K562 (cell line): ENCODE measurements at regions of chr9 and their contacts with region 1.

Region 1: DNA sequence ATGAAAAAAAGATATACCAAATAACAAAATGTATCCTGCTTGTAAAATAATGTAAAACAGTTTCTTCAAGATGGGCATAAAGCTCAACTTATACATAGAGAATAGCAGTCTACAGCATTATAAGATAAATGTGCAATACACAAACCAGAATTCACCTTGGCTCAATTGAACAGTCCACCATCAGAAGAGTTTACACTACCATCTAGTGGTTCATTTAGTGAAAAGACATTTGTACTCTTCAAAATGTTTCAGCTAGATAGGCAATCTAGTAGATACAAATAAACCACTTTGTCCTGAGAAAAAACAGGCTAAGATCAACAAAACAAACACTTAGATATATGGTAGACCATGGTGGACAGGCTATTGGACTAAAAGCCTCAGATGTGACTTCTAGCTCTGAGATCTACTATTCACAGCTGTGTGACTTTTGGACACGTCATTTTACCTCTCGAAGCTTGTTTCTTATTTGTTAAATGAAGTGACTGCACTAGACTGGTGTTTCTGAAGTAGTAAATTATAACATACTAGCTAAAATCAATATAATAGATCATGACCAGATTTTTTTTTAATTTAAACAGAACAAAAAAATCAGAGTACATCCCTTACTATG is 22.1 kb upstream of the TPD52L3 start:
- DNase-seq: peak in 2 of 4 experiments; percentile 17 to 20
- ATAC-seq: peak; percentile 58; the same call in 2 of the 3 replicates
- H3K4me3 ChIP-seq: no peak overlapping the region
- H3K27ac ChIP-seq: no peak overlapping the region
- H3K4me1 ChIP-seq: no peaks in the 10 kb centered on the region
- H3K27me3 ChIP-seq: no peaks in the 10 kb centered on the region
- CTCF ChIP-seq: peak in 2 of 3 experiments; percentile 14 to 54; a peak in 3 of 6 replicates
- EP300 ChIP-seq: no peak
- POLR2A ChIP-seq: no peak
- RAD21 ChIP-seq: peak; percentile 62 to 82

Region 2: DNA sequence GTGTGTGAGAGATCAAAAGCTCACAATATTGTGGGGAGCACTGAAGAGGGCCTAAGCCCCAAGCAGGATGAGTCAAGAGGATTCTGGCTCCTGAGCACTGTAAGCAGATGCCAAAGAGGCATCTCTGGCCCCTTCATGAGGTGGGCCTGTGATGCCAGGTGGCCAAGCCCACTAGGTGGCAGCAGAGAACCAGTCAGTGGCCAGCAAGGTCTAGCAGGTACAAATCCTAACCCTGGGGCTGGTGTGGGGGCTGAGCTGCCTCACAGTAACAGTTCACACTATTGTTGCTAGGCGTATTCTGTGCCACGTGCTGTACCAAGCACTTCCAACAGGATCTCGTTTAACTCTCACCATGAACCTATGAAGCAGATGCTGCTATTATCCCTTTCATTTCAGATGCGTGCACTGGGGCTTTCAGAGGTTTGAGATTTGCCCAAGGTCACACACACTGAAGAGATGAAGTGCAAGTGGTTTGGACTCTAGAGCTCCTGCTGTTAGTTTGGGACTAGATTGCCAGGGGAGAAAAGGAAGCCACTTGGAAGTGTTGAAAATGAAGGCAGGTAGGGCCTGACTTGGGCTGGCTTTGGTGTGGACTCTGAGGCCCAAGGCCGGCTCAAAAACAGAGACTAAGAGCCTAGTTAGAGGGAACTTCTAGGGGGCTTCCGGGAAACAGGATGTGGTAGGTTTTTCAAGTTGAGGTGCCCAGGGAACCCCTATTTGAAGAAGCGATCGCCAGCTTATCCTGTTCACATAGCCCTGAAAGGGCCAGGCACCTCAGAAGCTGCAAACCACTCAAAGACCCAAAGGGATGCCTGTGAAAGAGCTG is 419.7 kb before region 1 on chr9:
- CTCF ChIA-PET with region 1: interaction called, 4 read pairs
- POLR2A ChIA-PET with region 1: no interaction called
- in situ Hi-C with region 1: loop called (anchors 25 kb)
- intact Hi-C with region 1: loop called (anchors 5 kb)
- DNase-seq: peak; percentile 67 to 80 (median 75)
- ATAC-seq: peak; percentile 99
- H3K4me3 ChIP-seq: no peak overlapping the region
- H3K27ac ChIP-seq: no peak overlapping the region
- H3K4me1 ChIP-seq: 0 out of 5 replicates have a peak, but pooled peaks cover 0 to 3% of the 10 kb centered on the region in 2 experiments
- H3K27me3 ChIP-seq: no peaks in the 10 kb centered on the region
- CTCF ChIP-seq: peak; percentile 79 to 88 (median 85)
- EP300 ChIP-seq: no peak
- POLR2A ChIP-seq: no peak
- RAD21 ChIP-seq: peak; percentile 75 to 92

Region 3: DNA sequence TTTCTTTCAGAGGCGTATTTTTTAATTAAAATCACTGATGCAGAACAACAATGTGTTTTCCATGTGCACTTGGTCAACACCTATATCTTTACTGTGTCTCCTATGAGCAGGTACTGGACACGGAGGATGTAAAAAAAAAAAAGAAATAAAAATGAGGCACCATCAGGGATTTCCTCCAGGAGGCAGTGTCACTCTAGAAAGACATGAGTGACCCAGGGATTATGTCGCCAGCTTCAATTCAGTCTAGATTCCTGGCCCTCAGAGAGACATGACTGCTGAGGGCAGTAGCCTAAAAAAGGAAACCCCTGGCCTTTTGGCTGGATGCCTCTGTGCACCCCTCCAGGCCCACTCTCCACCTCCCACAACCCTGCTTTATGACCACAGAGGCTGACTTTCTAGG is 108.7 kb before region 1 on chr9:
- CTCF ChIA-PET with region 1: no interaction called
- POLR2A ChIA-PET with region 1: no interaction called
- in situ Hi-C with region 1: no loop called
- intact Hi-C with region 1: loop called (anchors 10 kb)
- DNase-seq: peak in 2 of 4 experiments; percentile 9 to 14
- ATAC-seq: 0 out of 3 replicates have a peak, but pooled peaks have one; percentile 39
- H3K4me3 ChIP-seq: no peak overlapping the region
- H3K27ac ChIP-seq: no peak overlapping the region
- H3K4me1 ChIP-seq: no peaks in the 10 kb centered on the region
- H3K27me3 ChIP-seq: no peaks in the 10 kb centered on the region
- CTCF ChIP-seq: peak; percentile 11 to 37 (median 24); a peak in 2 of 6 replicates
- EP300 ChIP-seq: no peak
- POLR2A ChIP-seq: no peak
- RAD21 ChIP-seq: no peak

Region 4: GRCh38 chr9:6348766-6349165 is 42.7 kb after region 1 on chr9:
- CTCF ChIA-PET with region 1: no interaction called
- POLR2A ChIA-PET with region 1: no interaction called
- in situ Hi-C with region 1: no loop called
- intact Hi-C with region 1: no loop called
- DNase-seq: no peak
- ATAC-seq: no peak
- H3K4me3 ChIP-seq: no peak overlapping the region
- H3K27ac ChIP-seq: no peak overlapping the region
- H3K4me1 ChIP-seq: no peaks in the 10 kb centered on the region
- H3K27me3 ChIP-seq: no peaks in the 10 kb centered on the region
- CTCF ChIP-seq: no peak
- EP300 ChIP-seq: no peak
- POLR2A ChIP-seq: no peak
- RAD21 ChIP-seq: no peak